Activated CD8-positive, alpha-beta memory T cell treated with anti-CD3 and anti-CD28 coated beads, Interleukin-2, amount 10 ng/mL, durations not matched to agents 7 days and 5 days (primary cell): ENCODE measurements at regions of chr2 and their contacts with region 1.

Region 1: DNA sequence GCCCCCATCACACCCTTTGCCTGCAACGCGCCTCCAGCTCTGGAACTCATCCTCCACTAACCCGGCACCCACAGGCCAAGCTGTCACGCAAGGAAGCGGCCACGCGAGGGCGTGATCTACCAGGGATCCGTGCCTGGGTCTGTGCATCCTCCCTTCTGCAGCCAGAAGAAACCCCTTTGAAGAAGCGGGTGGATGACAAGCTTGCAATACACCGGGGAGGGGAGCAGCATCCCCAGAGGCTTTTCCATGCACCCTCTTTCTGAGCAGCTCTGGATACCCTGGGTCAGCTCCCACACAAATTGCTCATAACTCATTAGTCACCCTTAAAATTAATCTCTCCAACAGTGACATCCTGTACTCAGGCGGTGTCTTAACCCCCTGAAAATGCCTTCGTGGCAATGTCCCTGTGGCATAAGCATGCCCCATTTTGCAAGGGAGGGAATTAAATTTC is 47.6 kb downstream of the PDCL3 start:
- DNase-seq: peak; percentile 81
- ATAC-seq: peak; percentile 92
- H3K4me3 Mint-ChIP-seq: no peak overlapping the region
- H3K27ac Mint-ChIP-seq: no peak overlapping the region
- H3K4me1 Mint-ChIP-seq: peaks cover 2% of the 10 kb centered on the region
- H3K27me3 Mint-ChIP-seq: peaks cover 5% of the 10 kb centered on the region

Region 2: GRCh38 chr2:100397118-100397770 is 213.2 kb before region 1 on chr2:
- CTCF ChIA-PET with region 1: no interaction called
- DNase-seq: no peak
- ATAC-seq: no peak
- H3K4me3 Mint-ChIP-seq: no peak overlapping the region
- H3K27ac Mint-ChIP-seq: no peak overlapping the region
- H3K4me1 Mint-ChIP-seq: no peaks in the 10 kb centered on the region
- H3K27me3 Mint-ChIP-seq: no peaks in the 10 kb centered on the region

Region 3: GRCh38 chr2:100548771-100549170 is 61.6 kb before region 1 on chr2:
- CTCF ChIA-PET with region 1: no interaction called
- DNase-seq: no peak
- ATAC-seq: no peak
- H3K4me3 Mint-ChIP-seq: no peak overlapping the region
- H3K27ac Mint-ChIP-seq: no peak overlapping the region
- H3K4me1 Mint-ChIP-seq: peaks cover 2% of the 10 kb centered on the region
- H3K27me3 Mint-ChIP-seq: peaks cover 14% of the 10 kb centered on the region

Region 4: GRCh38 chr2:100592226-100592625 is 18.2 kb before region 1 on chr2:
- CTCF ChIA-PET with region 1: interaction called, 29 read pairs
- DNase-seq: no peak
- ATAC-seq: no peak
- H3K4me3 Mint-ChIP-seq: no peak overlapping the region
- H3K27ac Mint-ChIP-seq: no peak overlapping the region
- H3K4me1 Mint-ChIP-seq: peaks cover 33% of the 10 kb centered on the region
- H3K27me3 Mint-ChIP-seq: peaks cover 3% of the 10 kb centered on the region

Region 5: DNA sequence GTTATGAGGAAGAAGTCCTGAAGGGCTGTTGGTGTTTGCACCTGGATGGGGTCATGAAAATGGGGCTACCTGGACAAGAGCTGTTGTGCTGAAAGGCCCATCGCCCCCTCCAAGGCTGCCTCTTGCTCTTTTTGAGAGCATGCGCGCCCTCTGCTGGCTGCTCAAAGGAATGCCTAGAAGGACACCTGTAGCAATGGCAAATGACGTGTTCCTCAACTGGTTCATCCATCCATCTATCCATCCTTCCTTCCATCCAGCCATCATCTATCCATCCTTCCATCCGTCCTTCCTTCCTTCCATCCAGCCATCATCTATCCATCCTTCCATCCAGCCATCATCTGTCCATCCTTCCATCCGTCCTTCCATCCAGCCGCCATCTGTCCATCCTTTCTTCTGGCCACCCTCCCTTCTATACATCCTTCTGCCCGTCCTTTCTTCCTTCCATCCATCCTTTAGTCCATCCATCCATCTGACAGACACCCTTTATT is 374.5 kb after region 1 on chr2:
- CTCF ChIA-PET with region 1: interaction called, 39 read pairs
- DNase-seq: peak; percentile 80
- ATAC-seq: peak; percentile 79
- H3K4me3 Mint-ChIP-seq: no peak overlapping the region
- H3K27ac Mint-ChIP-seq: no peak overlapping the region
- H3K4me1 Mint-ChIP-seq: no peaks in the 10 kb centered on the region
- H3K27me3 Mint-ChIP-seq: peaks cover 2% of the 10 kb centered on the region